Head of caudate nucleus (tissue), 42 donors: ENCODE measurements at regions of chr1 and their contacts with region 1.

Region 1: DNA sequence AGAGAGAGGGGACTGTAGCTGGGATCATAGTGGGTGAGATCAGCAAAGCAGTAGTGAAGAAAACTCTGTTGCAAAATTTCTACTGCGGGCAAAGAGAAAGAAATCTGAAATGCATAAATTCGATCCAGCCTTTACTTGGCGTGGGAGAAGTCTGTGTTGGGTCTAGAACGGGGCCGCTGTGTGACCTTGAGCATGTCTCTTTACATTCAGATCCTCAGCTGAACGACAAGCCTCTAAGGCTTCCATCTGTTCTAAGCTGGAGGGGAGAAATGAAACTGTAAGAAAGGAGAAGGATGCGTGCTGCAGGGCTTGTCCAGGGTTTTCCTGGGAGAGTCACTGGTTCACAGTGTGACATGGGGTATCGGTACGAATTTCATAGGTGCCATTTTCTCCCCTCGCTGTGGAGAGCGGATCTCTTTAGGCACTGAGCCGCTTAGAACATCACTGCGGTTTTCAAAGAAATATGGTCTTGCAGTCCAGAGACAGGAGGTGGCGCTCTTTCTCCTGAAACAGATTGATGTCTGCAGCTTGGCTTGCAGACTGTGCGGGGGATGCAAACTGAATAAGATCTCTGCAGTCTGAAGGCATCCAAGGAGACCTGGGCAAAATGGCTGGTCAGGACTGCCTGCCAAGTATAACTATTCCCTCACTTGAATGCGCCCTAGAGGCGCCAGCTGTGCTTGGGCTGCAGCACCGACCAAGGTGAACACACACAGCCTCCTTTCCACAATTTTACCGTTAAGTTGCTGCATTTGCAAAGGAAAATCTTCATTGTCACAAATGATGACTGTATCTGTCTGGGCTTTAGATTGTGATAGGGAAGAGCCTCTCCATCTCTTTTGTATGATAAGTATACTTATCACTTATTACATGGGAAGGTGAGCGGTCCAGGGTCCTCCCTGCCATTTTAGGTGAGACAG is 104.1 kb downstream of the XCL2 start:
- DNase-seq: peak; percentile 39 to 93 (median 79)

Region 2: GRCh38 chr1:168408536-168409242 is 31.0 kb before region 1 on chr1:
- intact Hi-C with region 1: no loop called
- DNase-seq: peak in 7 of 42 donors; percentile 33 to 71 (median 37)

Region 3: DNA sequence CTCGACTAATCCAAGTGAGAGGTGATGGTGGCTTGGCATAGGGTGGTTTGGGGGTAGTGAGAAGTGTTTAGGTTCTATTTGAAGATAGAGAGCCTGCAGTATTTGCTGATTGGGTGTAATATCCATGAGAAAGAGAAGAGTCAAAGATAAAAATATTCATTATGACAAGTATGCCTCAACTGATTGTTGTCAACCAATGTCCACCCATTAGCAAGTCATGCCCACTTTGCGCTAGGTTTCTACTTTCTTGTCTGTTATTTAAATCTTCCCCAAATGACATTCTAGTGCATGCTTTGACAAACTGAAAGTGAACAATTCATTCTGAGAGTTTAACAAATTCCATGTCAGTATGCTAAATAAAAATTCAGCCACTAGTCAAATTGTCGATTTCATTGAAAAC is 132.9 kb after region 1 on chr1:
- intact Hi-C with region 1: loop called (anchors 10 kb)
- DNase-seq: no peak